ENCODE measurements at regions of chr6 and their contacts with region 1.

Region 1: DNA sequence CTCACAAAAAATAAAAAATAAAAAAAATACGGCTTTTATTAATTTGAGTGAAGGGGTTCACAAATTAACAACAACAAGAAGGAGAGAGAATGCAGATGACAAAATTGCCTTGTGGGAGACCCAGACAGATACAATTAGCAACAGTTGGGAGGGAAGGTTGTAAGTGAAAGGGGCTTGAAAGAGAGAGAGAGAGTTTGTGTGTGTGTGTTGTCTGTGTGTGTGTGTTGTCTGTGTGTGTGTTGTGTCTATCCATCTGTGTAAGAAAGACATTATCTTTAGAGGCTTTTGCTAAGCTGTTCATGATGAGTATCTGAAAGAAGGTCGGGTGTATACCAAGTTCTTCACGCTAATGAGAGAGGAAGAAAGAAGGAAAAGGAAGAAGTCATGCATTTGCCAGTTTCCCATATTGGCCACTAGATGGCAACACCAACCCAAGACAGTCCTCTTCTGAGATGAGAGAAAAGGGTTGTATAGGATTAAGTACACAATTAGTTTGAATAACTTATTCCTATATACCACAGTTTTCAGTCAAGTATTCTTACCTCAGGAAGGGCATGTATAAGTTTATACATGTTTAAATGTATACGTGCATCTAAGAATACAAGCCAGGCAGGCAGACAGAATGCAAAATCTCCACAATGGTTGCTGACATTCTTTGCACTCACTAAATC is 63.7 kb upstream of the CD2AP start:
- DNase-seq: peak; percentile 57
- CTCF ChIP-seq: peak; percentile 88

Region 2: GRCh38 chr6:47403801-47404200 is 10.1 kb before region 1 on chr6:
- CTCF ChIA-PET with region 1: interaction called, 10 read pairs
- POLR2A ChIA-PET with region 1: no interaction called
- DNase-seq: no peak
- CTCF ChIP-seq: no peak

Region 3: DNA sequence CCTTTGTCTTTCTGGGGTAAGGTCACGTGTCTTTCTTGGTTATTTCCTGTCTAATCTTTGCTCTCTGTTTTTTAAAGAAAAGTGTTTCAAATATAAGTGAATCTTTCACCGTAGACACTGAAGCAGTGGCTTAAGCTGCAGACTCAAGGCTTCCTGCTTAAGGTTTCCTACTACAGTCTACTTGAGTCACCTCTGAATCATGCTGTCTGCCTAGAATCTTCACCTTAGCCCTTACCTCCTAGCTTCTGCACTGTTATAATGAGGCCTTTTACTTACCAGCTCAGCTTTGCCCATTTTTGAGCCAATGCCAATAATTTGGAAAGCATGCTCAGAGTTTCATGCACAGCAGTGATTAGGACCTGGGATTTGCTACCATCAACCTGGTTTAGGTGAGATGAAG is 315.1 kb after region 1 on chr6:
- CTCF ChIA-PET with region 1: interaction called, 28 read pairs
- POLR2A ChIA-PET with region 1: no interaction called
- DNase-seq: no peak
- CTCF ChIP-seq: no peak

Region 4: GRCh38 chr6:47780510-47781356 is 366.8 kb after region 1 on chr6:
- CTCF ChIA-PET with region 1: interaction called, 15 read pairs
- POLR2A ChIA-PET with region 1: no interaction called
- DNase-seq: peak; percentile 44
- CTCF ChIP-seq: peak; percentile 57